Activated CD4-positive, alpha-beta T cell treated with anti-CD3 and anti-CD28 coated beads, Interleukin-2, amount 10 ng/mL, durations not matched to agents 7 days and 5 days (primary cell): ENCODE measurements at regions of chr17 and their contacts with region 1.

Region 1: DNA sequence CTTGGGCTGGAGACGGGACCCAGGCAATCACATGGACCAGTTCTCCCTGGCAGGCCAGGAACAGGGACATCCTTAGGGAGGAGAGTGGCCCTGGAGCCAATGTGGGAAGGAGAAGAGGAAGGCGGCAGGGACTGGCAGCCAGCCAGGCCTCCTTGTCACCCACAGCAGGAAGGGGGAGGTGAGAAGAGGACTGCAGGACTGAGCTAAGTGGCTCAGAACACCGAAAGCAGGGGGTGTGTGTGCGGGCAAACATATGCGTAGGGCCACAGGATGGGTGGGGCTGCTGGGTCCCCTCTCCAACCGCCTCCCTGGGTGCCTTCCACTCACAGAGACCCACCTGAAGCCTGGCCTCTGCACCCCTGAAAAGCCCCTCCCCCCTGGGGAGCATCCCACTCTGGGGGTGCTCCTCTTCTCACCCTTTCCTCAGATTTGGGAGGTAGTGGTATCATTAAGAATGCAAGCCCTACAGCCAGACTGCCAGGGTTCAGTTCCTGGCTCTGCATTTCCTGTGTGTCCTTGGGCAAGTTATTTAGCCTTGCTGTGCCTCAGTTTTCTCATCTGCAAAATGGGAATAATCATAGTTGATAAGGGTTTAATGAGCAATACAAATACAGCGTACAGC is 8.1 kb downstream of the PNMT start:
- DNase-seq: peak; percentile 70
- H3K4me3 Mint-ChIP-seq: no peak overlapping the region
- H3K27ac Mint-ChIP-seq: peak overlapping the region; percentile 86
- H3K4me1 Mint-ChIP-seq: peaks cover 61% of the 10 kb centered on the region
- H3K27me3 Mint-ChIP-seq: no peaks in the 10 kb centered on the region

Region 2: DNA sequence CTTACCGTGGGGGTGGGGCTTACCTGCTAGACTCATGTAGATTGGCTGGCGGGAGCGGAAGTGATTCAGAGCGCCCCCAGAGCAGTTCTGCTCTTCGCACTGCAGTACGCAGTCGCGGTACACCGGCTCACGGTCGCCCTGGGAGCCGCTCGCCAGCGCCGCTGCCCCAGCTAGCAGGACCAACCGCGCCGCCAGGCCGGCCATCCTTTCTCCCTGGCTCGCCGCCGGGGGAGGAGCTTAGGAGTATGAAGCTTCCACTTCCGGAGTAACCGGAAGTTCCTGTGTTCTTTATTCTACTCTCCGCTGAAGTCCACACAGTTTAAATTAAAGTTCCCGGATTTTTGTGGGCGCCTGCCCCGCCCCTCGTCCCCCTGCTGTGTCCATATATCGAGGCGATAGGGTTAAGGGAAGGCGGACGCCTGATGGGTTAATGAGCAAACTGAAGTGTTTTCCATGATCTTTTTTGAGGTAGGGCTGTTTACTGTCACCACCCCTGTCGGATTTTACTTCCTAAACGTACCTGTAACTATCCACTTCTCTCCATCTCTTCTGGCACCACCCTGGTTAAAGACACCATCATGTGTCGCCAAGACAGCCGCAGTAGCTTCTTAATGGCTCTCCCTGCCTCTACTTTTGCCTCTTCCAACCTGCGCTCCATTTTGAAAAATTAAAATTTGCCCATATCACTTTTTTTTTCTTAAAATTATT is 11.7 kb after region 1 on chr17 and contains the start of gene PGAP3:
- CTCF ChIA-PET with region 1: interaction called, 13 read pairs
- POLR2A ChIA-PET with region 1: no interaction called
- DNase-seq: peak; percentile 83
- H3K4me3 Mint-ChIP-seq: peak within 1 kb of the TSS; percentile 94
- H3K27ac Mint-ChIP-seq: peak within 1 kb of the TSS; percentile 98
- H3K4me1 Mint-ChIP-seq: peaks cover 32% of the 10 kb centered on the region
- H3K27me3 Mint-ChIP-seq: no peaks in the 10 kb centered on the region
- total RNA-seq, gene PGAP3: 27.0 to 30.6 TPM

Region 3: GRCh38 chr17:39744836-39745672 is 68.7 kb after region 1 on chr17:
- CTCF ChIA-PET with region 1: no interaction called
- POLR2A ChIA-PET with region 1: no interaction called
- DNase-seq: no peak
- H3K4me3 Mint-ChIP-seq: no peak overlapping the region
- H3K27ac Mint-ChIP-seq: peak overlapping the region; percentile 66
- H3K4me1 Mint-ChIP-seq: peaks cover 12% of the 10 kb centered on the region
- H3K27me3 Mint-ChIP-seq: no peaks in the 10 kb centered on the region